SK-N-SH (cell line): ENCODE measurements at regions of chr19 and their contacts with region 1.

Region 1: GRCh38 chr19:19554074-19555023 is 16.3 kb downstream of the CILP2 start:
- DNase-seq: peak; percentile 86
- H3K4me3 ChIP-seq: no peak overlapping the region
- H3K27ac ChIP-seq: no peak overlapping the region
- H3K4me1 ChIP-seq: no peaks in the 10 kb centered on the region; a peak in 1 of 4 replicates
- H3K27me3 ChIP-seq: no peaks in the 10 kb centered on the region
- CTCF ChIP-seq: peak; percentile 69
- EP300 ChIP-seq: no peak
- RAD21 ChIP-seq: peak; percentile 57

Region 2: GRCh38 chr19:19502808-19503602 is 51.3 kb before region 1 on chr19:
- CTCF ChIA-PET with region 1: no interaction called
- POLR2A ChIA-PET with region 1: no interaction called
- DNase-seq: no peak
- H3K4me3 ChIP-seq: no peak overlapping the region
- H3K27ac ChIP-seq: no peak overlapping the region
- H3K4me1 ChIP-seq: no peaks in the 10 kb centered on the region
- H3K27me3 ChIP-seq: no peaks in the 10 kb centered on the region
- CTCF ChIP-seq: no peak
- EP300 ChIP-seq: no peak
- RAD21 ChIP-seq: no peak

Region 3: GRCh38 chr19:19568802-19569756 is 14.7 kb after region 1 on chr19:
- CTCF ChIA-PET with region 1: interaction called, 56 read pairs
- POLR2A ChIA-PET with region 1: no interaction called
- DNase-seq: no peak
- H3K4me3 ChIP-seq: no peak overlapping the region
- H3K27ac ChIP-seq: no peak overlapping the region
- H3K4me1 ChIP-seq: no peaks in the 10 kb centered on the region
- H3K27me3 ChIP-seq: no peaks in the 10 kb centered on the region
- CTCF ChIP-seq: no peak
- EP300 ChIP-seq: peak in 1 of 2 experiments; percentile 19; a peak in 1 of 4 replicates
- RAD21 ChIP-seq: no peak

Region 4: GRCh38 chr19:19581391-19581790 is 27.0 kb after region 1 on chr19:
- CTCF ChIA-PET with region 1: interaction called, 56 read pairs
- POLR2A ChIA-PET with region 1: no interaction called
- DNase-seq: no peak
- H3K4me3 ChIP-seq: no peak overlapping the region
- H3K27ac ChIP-seq: no peak overlapping the region
- H3K4me1 ChIP-seq: peaks cover 0 to 6% of the 10 kb centered on the region in 2 experiments; a peak in 1 of 4 replicates
- H3K27me3 ChIP-seq: no peaks in the 10 kb centered on the region
- CTCF ChIP-seq: no peak
- EP300 ChIP-seq: no peak
- RAD21 ChIP-seq: no peak

Region 5: DNA sequence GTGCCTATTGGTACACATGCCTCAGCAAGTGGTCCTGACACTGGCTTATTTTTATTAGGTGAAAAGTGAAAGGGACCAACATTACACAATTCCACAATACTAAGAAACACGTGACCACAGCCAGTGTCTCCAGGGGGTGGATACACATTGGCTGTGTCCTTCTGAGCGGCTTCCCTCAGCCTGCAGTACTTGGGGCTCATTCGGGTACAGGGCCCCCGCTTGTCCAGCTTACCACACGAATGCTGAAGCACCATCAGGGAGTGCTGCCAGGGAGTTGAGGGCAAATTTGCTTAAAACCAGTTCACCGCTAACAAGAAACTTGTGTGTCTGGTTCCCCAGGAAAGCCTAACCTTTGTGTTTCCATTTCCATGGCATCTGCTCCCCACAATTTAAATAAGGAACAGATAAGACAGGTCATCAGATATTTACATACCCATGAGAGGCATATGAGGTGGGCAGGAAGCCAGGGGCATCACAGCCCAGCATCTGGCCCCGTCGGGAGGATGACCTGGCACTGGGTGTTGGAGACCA is 40.9 kb after region 1 on chr19:
- CTCF ChIA-PET with region 1: interaction called, 11 read pairs
- POLR2A ChIA-PET with region 1: no interaction called
- DNase-seq: peak; percentile 72
- H3K4me3 ChIP-seq: no peak overlapping the region
- H3K27ac ChIP-seq: peak overlapping the region in 1 of 2 experiments; percentile 18; a peak in 1 of 4 replicates
- H3K4me1 ChIP-seq: peaks cover 14 to 18% of the 10 kb centered on the region in 2 experiments; a peak in 3 of 4 replicates
- H3K27me3 ChIP-seq: no peaks in the 10 kb centered on the region
- CTCF ChIP-seq: no peak
- EP300 ChIP-seq: no peak; a peak in 1 of 4 replicates
- RAD21 ChIP-seq: no peak

Region 6: DNA sequence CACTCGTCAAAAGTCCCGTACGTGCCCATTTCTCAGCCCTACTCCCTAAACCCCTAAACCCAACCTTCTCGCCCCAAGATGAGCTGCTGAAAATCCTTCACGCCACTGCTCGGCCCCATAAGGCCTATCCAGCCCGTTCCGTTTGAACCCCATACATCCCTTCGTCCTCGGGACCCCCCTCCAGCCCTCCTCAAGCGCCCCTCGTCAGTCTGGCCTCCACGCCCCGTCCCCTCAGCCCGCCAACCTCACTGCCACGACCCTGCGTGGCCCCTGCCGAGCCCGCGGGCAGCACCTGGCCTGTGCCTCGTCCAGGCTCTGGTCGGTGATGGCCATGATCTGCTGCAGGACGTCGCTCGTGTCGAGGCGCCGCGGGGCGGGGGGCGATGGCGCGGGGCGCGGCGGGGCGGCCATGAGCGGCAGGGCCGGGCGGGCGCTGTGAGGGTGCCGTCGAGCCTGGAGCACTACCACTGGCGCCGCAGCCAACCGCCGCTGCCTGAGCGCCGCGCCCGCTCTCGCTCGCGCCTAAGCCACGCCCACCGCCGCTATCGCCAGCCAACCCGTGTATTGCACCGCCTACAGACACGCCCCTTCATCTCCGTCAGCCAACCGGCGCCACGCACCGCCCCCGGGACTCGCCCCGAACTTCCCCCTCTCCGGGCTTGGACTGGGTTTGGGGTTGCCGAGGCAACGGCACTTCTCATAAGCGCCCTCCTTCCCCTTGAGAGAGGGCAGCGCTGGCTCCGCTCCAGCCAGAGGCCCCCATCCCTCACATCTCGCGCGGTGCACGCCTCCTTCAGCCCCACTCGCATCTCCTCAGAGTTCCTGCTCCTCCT is 64.1 kb after region 1 on chr19 and contains the start of gene PBX4:
- CTCF ChIA-PET with region 1: interaction called, 10 read pairs
- POLR2A ChIA-PET with region 1: no interaction called
- DNase-seq: peak; percentile 99
- H3K4me3 ChIP-seq: peak within 1 kb of the TSS; percentile 51 to 74
- H3K27ac ChIP-seq: peak within 1 kb of the TSS in 1 of 2 experiments; percentile 51; a peak in 2 of 4 replicates
- H3K4me1 ChIP-seq: peaks cover 4% of the 10 kb centered on the region in 2 experiments; a peak in 2 of 4 replicates
- H3K27me3 ChIP-seq: no peaks in the 10 kb centered on the region
- CTCF ChIP-seq: no peak
- EP300 ChIP-seq: no peak
- RAD21 ChIP-seq: no peak
- polyA plus RNA-seq, gene PBX4: 5.1 and 6.4 TPM in 2 replicates